Activated T-helper 1 cell treated with anti-CD3 and anti-CD28 coated beads, Interleukin-12 subunit alpha, Interleukin-12 subunit beta, Interleukin-2, Interleukin-4 antibody, amounts not matched to agents 30 ng/mL and 10 ng/mL and 1 ng/mL, durations not matched to agents 14 hours and 24 hours and 36 hours (primary cell): ENCODE measurements at regions of chr19 and their contacts with region 1.

Region 1: DNA sequence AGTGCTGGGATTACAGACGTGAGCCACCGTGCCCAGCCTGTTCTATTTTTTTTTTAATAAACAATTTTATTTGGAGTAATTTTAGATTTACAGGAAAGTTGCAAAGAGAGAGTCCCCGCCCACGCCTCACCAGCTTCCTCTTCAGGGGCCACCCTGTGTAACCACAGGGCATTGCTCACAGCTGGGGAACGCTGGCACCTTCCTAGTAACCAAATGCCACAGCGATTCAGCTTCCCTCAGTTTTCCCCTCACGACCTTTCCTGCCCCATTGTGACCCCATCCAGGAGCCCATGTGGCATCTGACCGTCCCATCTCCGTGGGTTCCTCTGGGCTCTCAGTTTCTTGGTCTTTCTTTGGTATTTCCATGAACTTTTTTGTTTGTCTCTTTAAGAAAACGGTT is 83.9 kb downstream of the GNG7 start:
- DNase-seq: peak; percentile 36
- H3K4me3 Mint-ChIP-seq: peak overlapping the region; percentile 63
- H3K27ac Mint-ChIP-seq: peak overlapping the region; percentile 96
- H3K4me1 Mint-ChIP-seq: peaks cover 64% of the 10 kb centered on the region
- H3K27me3 Mint-ChIP-seq: peaks cover 2% of the 10 kb centered on the region

Region 2: GRCh38 chr19:2302319-2303210 is 316.0 kb before region 1 on chr19:
- intact Hi-C with region 1: no loop called
- DNase-seq: no peak
- H3K4me3 Mint-ChIP-seq: no peak overlapping the region
- H3K27ac Mint-ChIP-seq: no peak overlapping the region
- H3K4me1 Mint-ChIP-seq: no peaks in the 10 kb centered on the region
- H3K27me3 Mint-ChIP-seq: peaks cover 41% of the 10 kb centered on the region

Region 3: DNA sequence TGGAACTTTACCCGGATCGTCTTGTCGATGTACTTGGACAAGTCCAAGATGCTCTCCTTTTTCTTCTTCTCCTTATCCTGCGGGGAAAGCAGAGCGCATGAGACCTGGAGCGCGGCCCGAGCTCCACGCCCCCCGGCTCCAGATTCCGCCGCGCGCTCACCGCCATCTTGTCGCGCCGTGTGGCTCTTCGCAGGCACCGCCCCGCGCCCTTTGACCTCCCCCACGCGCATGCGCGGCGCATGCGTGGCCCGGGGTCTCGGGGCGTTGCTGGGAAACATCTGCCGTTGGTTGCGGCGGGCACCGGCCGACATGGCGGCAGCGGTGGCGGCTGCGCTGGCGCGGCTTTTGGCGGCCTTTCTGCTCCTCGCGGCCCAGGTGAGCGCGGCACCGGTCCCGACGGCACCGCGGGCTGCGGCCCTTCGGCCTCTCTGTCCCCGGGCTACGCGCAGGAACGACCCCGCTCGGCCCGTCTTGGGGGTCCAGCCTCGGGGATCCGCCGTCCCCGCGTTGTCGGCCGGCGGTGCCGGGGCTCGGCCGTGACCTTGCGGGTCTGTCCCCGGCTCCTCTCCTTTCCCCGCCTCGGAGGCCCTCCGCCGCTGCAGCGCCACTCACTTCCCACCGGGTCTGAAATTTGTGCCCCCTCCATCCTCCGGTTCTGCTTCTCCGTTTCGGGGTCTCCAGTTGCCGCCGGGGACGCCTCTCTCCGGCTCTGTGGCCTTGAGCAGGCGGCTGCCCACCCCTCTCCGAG is 290.0 kb before region 1 on chr19 and contains the starts of genes LSM7 and SPPL2B:
- intact Hi-C with region 1: loop called (anchors 2 kb)
- DNase-seq: peak; percentile 91
- H3K4me3 Mint-ChIP-seq: peak within 1 kb of the TSS; percentile 100
- H3K27ac Mint-ChIP-seq: peak within 1 kb of the TSS; percentile 100
- H3K4me1 Mint-ChIP-seq: peaks cover 63% of the 10 kb centered on the region
- H3K27me3 Mint-ChIP-seq: no peaks in the 10 kb centered on the region
- total RNA-seq, gene LSM7: 180 and 193 TPM in 2 replicates
- total RNA-seq, gene SPPL2B: 71.2 and 71.4 TPM in 2 replicates

Region 4: DNA sequence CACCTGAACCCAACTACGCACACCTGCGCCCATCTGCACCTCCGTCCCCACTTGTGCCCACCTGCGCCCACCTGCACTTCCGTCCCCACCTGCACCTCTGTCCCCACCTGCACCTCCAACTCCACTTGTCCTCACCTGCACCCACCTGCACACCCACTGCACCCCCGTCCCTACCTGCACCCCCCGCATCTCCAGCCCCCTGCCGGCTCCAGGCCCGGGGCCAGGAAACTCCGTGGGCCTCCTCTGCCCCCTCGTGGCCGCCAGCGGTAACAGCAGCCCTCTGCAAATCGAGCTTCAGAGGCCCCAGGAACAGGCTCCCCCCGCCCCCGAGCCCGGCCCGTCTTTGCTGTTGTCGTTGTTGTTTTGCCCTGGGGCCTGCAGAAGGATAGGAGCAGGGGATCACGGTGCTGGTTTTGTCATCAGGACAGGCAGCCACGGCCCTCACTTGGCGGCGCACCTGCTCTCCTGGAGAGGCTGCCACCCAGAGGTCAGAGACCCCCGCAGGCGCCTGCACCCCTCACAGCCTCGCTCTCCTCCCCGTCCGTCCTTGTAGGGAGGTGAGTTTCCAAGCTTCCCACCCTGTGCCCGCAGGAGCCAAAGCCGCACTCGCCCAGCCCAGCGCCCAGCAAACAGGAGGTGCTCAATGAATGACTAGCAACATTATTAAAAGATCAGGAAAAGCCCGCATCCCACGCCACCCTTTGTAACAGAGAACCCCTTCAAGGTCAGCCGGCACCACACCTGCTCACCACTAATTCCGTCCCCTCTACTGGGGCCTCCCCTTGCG is 18.5 kb after region 1 on chr19:
- intact Hi-C with region 1: loop called (anchors 1 kb)
- DNase-seq: peak; percentile 61
- H3K4me3 Mint-ChIP-seq: no peak overlapping the region
- H3K27ac Mint-ChIP-seq: peak overlapping the region; percentile 34
- H3K4me1 Mint-ChIP-seq: peaks cover 6% of the 10 kb centered on the region
- H3K27me3 Mint-ChIP-seq: peaks cover 17% of the 10 kb centered on the region